Activated CD8-positive, alpha-beta memory T cell treated with anti-CD3 and anti-CD28 coated beads, Interleukin-2, amount 10 ng/mL, durations not matched to agents 7 days and 5 days (primary cell): ENCODE measurements at regions of chr19 and their contacts with region 1.

Region 1: GRCh38 chr19:4851551-4852290 is 15.7 kb downstream of the PLIN3 start:
- DNase-seq: peak; percentile 82
- ATAC-seq: peak; percentile 87
- H3K4me3 Mint-ChIP-seq: no peak overlapping the region
- H3K27ac Mint-ChIP-seq: no peak overlapping the region
- H3K4me1 Mint-ChIP-seq: peaks cover 3% of the 10 kb centered on the region
- H3K27me3 Mint-ChIP-seq: no peaks in the 10 kb centered on the region

Region 2: DNA sequence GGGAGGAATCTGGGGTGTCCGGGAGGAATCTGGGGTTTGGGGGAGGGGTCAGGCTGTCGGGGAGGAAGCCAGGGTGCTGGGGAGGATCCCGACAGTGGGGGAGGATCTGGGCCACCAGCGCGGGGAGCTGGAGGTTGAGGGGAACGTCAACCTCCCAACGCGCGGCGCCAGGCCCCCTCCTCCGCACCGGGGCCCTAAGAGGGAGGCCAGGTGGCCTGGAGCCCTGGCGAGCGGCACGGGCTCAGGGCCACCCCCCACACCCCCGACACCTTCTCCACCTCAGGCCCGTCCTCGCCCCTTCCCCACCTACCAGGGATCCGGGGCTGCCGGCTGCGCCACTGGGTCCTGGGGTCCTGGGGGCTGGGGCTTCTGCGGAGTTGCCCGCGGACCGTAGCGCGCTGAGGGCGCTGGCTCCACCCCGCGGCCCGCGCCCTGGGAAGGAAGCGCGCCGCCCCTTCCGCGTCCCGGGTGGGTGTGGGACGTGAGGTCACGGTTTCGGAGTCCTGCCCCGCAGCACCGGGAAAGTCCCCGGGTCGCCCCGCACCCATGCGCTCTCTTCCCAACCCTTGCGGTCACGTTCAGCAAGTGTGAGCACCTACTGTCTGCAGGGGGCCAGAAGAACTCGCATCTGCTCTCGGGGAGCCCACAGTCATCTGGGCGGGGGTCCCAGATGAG is 20.3 kb before region 1 on chr19 and contains the start of gene TICAM1:
- CTCF ChIA-PET with region 1: interaction called, 11 read pairs
- DNase-seq: peak; percentile 78
- ATAC-seq: peak; percentile 94
- H3K4me3 Mint-ChIP-seq: peak within 1 kb of the TSS; percentile 87
- H3K27ac Mint-ChIP-seq: peak within 1 kb of the TSS; percentile 84
- H3K4me1 Mint-ChIP-seq: peaks cover 30% of the 10 kb centered on the region
- H3K27me3 Mint-ChIP-seq: no peaks in the 10 kb centered on the region
- total RNA-seq, gene TICAM1: 19.5 to 22.4 TPM

Region 3: GRCh38 chr19:4896372-4896771 is 44.7 kb after region 1 on chr19:
- CTCF ChIA-PET with region 1: no interaction called
- DNase-seq: no peak
- ATAC-seq: no peak
- H3K4me3 Mint-ChIP-seq: no peak overlapping the region
- H3K27ac Mint-ChIP-seq: no peak overlapping the region
- H3K4me1 Mint-ChIP-seq: no peaks in the 10 kb centered on the region
- H3K27me3 Mint-ChIP-seq: no peaks in the 10 kb centered on the region

Region 4: GRCh38 chr19:4909897-4910593 is 58.3 kb after region 1 on chr19:
- CTCF ChIA-PET with region 1: interaction called, 24 read pairs
- DNase-seq: peak; percentile 97
- ATAC-seq: peak; percentile 88
- H3K4me3 Mint-ChIP-seq: peak overlapping the region; percentile 79
- H3K27ac Mint-ChIP-seq: peak overlapping the region; percentile 82
- H3K4me1 Mint-ChIP-seq: peaks cover 45% of the 10 kb centered on the region
- H3K27me3 Mint-ChIP-seq: no peaks in the 10 kb centered on the region

Region 5: DNA sequence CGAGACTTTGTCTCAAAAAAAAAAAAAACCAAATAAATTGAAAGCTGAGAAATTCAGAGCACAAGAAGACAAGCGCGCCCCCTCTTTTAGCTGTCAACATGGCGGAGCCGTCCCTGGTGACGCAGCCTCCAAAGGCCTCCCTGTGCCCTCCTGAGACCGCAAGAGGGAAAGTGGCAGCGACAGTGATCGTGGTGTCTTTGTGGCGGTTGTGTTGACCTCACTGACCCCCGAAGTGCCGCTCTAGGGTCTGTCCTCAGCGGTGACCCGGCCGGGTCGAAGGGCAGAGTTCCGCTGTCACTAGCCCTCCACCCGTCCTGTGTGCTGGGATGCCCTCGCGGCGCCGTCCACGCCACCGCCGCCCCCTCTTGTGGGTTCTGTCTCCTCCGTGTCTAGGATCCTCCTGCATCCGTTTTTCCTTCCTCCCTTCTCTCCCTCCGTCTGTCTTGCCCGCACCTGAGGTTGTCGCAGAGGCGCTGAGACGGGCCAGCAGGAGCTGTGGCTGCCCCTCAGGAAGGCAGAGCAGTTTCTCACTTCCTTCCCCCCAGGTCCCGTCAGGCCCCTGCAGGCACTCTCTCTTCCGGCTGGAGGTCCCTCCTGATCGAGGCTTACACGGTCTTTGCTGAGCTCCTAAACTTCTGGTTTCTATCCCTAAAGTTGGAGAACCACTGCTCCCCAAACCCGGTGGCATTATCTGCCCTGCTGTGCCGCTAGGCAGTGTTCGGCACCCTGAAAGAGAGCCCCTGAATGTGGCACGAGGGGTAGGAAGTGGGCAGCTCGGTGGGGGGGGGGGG is 64.8 kb after region 1 on chr19:
- CTCF ChIA-PET with region 1: interaction called, 24 read pairs
- DNase-seq: peak; percentile 69
- ATAC-seq: peak; percentile 31
- H3K4me3 Mint-ChIP-seq: peak overlapping the region; percentile 81
- H3K27ac Mint-ChIP-seq: peak overlapping the region; percentile 91
- H3K4me1 Mint-ChIP-seq: peaks cover 61% of the 10 kb centered on the region
- H3K27me3 Mint-ChIP-seq: no peaks in the 10 kb centered on the region